ENCODE measurements at regions of chr22 and their contacts with region 1.

Region 1: DNA sequence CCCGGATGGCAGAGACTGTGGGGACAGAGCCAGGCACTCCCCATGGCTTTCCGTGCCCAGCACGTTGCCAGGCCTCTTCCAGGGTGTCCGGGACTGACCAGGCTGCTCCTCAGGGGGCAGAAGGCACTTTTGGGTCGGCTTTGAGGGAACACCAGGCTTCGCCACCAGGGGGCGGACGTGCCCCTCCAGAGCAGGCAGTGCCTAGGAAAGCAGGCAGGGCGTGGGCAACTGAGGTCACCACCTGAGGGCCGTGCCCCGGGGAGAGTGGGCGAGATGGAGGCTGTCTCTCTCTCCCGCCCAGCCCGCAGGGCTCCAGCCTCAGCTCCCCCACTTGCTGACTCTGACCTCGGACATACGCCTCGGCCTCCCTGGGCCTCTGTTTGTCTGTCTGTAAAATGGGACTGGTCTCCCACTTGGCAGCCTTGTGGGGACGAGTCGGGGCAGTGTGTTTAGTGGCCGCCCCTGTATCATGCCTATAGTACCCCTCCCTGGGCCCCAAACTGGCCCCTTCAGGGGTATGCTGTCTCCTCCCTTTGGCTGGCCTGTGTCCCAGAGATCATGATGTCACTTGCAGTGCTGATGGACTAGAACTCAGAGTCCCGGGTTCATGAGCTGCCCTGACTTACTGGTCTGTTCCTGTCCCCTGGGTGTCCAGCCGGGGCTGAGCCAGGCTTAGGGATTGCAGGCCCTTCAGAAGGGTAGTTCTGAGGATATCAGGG is 4.4 kb upstream of the PRR5 start:
- DNase-seq: peak in 1 of 2 donors; percentile 47
- ATAC-seq: peak in 1 of 2 donors; percentile 40
- H3K4me3 ChIP-seq: no peak overlapping the region
- H3K27ac ChIP-seq: no peak overlapping the region
- H3K4me1 ChIP-seq: no peaks in the 10 kb centered on the region
- H3K27me3 ChIP-seq: peaks cover 3 to 12% (median 7%) of the 10 kb centered on the region in 3 donors
- CTCF ChIP-seq: peak; percentile 60 to 87 (median 85)
- POLR2A ChIP-seq: no peak

Region 2: GRCh38 chr22:44729391-44730021 is 31.9 kb after region 1 on chr22:
- in situ Hi-C with region 1: loop called in 1 of 4 experiments (anchors 5 kb)
- intact Hi-C with region 1: no loop called
- DNase-seq: no peak
- ATAC-seq: peak in 1 of 2 donors; percentile 21
- H3K4me3 ChIP-seq: peak overlapping the region in 1 of 4 donors; percentile 13
- H3K27ac ChIP-seq: peak overlapping the region in 1 of 4 donors; percentile 39
- H3K4me1 ChIP-seq: peaks cover 0 to 13% of the 10 kb centered on the region in 2 donors
- H3K27me3 ChIP-seq: peaks cover 6 to 14% (median 8%) of the 10 kb centered on the region in 3 donors
- CTCF ChIP-seq: no peak
- POLR2A ChIP-seq: no peak

Region 3: GRCh38 chr22:44735540-44736488 is 38.2 kb after region 1 on chr22:
- in situ Hi-C with region 1: loop called in 2 of 4 experiments (anchors 5 kb)
- intact Hi-C with region 1: loop called (anchors 1 kb)
- DNase-seq: peak in 1 of 2 donors; percentile 26
- ATAC-seq: peak in 1 of 2 donors; percentile 50
- H3K4me3 ChIP-seq: no peak overlapping the region
- H3K27ac ChIP-seq: no peak overlapping the region
- H3K4me1 ChIP-seq: no peaks in the 10 kb centered on the region
- H3K27me3 ChIP-seq: peaks cover 4 to 8% (median 5%) of the 10 kb centered on the region in 3 donors
- CTCF ChIP-seq: peak; percentile 66 to 97 (median 92)
- POLR2A ChIP-seq: no peak